ENCODE measurements at regions of chr10 and their contacts with region 1.

Region 1: DNA sequence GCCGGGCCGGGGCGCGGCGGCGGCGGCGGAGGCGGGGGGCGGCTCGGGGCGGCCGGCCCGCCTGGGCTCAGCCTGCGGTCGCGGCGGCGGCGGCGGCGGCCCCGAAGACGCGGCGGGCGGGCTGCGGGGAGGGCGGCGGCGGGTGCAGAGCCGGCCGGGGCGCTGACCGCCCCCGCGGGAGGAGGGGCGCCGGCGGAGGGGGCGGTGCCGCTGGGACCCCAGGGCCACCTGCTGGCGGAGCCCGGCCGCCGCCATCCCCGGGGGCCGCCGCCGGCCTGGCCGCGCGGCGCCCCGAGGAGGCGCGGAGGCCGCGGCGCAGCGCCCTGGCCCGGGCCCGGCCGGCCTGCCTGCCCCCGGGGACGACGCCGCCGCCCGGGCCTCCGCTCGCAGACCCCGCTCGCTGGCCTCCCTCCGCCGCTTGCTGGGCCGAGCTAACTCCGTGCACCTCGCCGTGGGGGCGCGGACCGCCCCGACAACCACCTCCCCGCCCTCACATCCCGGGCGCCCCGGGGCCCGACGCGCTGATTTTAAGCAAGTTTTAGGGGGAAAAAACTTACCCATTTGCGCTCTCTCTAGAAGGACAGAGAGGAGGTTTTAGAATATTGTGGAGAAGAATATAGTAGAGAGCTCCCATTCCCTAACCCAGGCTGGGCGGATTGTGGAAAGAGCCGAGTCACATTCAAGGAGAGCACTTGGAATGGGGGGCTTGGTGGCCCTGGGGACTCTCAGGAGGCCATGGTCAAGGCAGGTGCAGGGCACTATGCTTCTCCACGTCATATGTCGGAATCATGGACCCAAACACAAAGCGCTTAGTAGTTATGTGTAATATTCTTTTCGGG is at the start of gene BEND7:
- DNase-seq: peak; percentile 27 to 67
- ATAC-seq: peak; percentile 77 to 91 (median 90)
- H3K4me3 ChIP-seq: peak within 1 kb of the TSS; percentile 44 to 89 (median 70)
- H3K27ac ChIP-seq: peak within 1 kb of the TSS; percentile 5 to 88 (median 69)
- H3K4me1 ChIP-seq: peaks cover 0 to 31% (median 18%) of the 10 kb centered on the region in 9 donors
- H3K27me3 ChIP-seq: peaks cover 0 to 62% (median 0%) of the 10 kb centered on the region in 7 donors
- CTCF ChIP-seq: no peak
- total RNA-seq, gene BEND7: 10.2 to 21.0 (median 13.3) TPM

Region 2: DNA sequence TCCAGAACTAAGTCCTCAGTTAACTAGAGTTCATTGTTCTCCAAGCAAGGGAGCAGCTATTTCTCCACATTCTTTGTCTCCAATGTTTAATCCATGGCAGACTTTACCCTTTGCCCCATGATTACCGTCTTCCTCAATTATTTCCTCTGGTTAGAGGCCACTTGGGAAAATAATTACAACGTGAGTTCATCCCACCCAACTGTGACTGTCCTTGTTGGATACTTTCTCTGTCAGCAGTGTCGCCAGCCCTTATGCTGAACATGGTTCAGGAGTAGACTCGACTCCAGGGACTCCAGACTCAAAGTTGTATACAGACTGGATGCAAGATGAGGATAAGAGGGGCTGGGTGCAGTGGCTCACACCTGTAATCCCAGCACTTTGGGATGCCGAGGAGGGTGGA is 163.9 kb before region 1 on chr10:
- intact Hi-C with region 1: loop called in 6 of 10 experiments (anchors 10 kb)
- DNase-seq: no peak
- ATAC-seq: no peak
- H3K4me3 ChIP-seq: no peak overlapping the region
- H3K27ac ChIP-seq: no peak overlapping the region
- H3K4me1 ChIP-seq: no peaks in the 10 kb centered on the region
- H3K27me3 ChIP-seq: peaks cover 0 to 3% (median 0%) of the 10 kb centered on the region in 7 donors
- CTCF ChIP-seq: no peak